ENCODE measurements at regions of chrX and their contacts with region 1.

Region 1: GRCh38 chrX:111652719-111653118 is 28.3 kb upstream of the ALG13 start:
- DNase-seq: no peak
- H3K4me3 ChIP-seq: no peak overlapping the region
- H3K4me3 Mint-ChIP-seq: no peak overlapping the region
- H3K27ac Mint-ChIP-seq: no peak overlapping the region
- H3K4me1 ChIP-seq: no peaks in the 10 kb centered on the region
- H3K4me1 Mint-ChIP-seq: no peaks in the 10 kb centered on the region
- H3K27me3 ChIP-seq: no peaks in the 10 kb centered on the region
- H3K27me3 Mint-ChIP-seq: no peaks in the 10 kb centered on the region
- CTCF ChIP-seq: no peak

Region 2: DNA sequence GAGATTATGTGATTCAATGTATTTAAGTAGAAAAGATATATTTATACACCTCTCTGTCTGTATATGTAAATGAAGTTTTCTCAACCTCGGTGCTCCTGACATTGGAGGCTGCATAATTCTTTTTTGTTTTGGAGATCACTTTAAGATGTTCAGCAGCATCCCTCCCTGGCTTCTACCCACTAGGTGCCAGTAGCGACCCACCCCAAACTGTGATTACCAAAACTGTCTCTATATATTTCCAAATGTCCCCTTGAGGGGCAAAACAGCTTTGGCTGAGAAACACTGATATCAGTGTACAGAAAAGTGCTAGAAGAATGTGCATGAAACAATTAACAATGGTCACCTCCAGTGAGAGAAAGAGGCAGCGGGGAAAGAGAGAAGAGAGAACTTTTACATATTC is 291.9 kb before region 1 on chrX:
- CTCF ChIA-PET with region 1: no interaction called
- POLR2A ChIA-PET with region 1: no interaction called
- intact Hi-C with region 1: loop called (anchors 10 kb)
- DNase-seq: peak in 1 of 2 experiments; percentile 4
- H3K4me3 ChIP-seq: no peak overlapping the region
- H3K4me3 Mint-ChIP-seq: no peak overlapping the region
- H3K27ac Mint-ChIP-seq: no peak overlapping the region
- H3K4me1 ChIP-seq: no peaks in the 10 kb centered on the region
- H3K4me1 Mint-ChIP-seq: no peaks in the 10 kb centered on the region
- H3K27me3 ChIP-seq: no peaks in the 10 kb centered on the region
- H3K27me3 Mint-ChIP-seq: no peaks in the 10 kb centered on the region
- CTCF ChIP-seq: no peak

Region 3: GRCh38 chrX:112137276-112137675 is 484.6 kb after region 1 on chrX:
- CTCF ChIA-PET with region 1: no interaction called
- POLR2A ChIA-PET with region 1: no interaction called
- intact Hi-C with region 1: no loop called
- DNase-seq: no peak
- H3K4me3 ChIP-seq: no peak overlapping the region
- H3K4me3 Mint-ChIP-seq: no peak overlapping the region
- H3K27ac Mint-ChIP-seq: no peak overlapping the region
- H3K4me1 ChIP-seq: no peaks in the 10 kb centered on the region
- H3K4me1 Mint-ChIP-seq: no peaks in the 10 kb centered on the region
- H3K27me3 ChIP-seq: no peaks in the 10 kb centered on the region
- H3K27me3 Mint-ChIP-seq: no peaks in the 10 kb centered on the region
- CTCF ChIP-seq: no peak

Region 4: GRCh38 chrX:112630187-112630586 is 977.5 kb after region 1 on chrX:
- CTCF ChIA-PET with region 1: no interaction called
- POLR2A ChIA-PET with region 1: no interaction called
- intact Hi-C with region 1: no loop called
- DNase-seq: no peak
- H3K4me3 ChIP-seq: no peak overlapping the region
- H3K4me3 Mint-ChIP-seq: no peak overlapping the region
- H3K27ac Mint-ChIP-seq: no peak overlapping the region
- H3K4me1 ChIP-seq: no peaks in the 10 kb centered on the region
- H3K4me1 Mint-ChIP-seq: no peaks in the 10 kb centered on the region
- H3K27me3 ChIP-seq: no peaks in the 10 kb centered on the region
- H3K27me3 Mint-ChIP-seq: peaks cover 10% of the 10 kb centered on the region
- CTCF ChIP-seq: no peak

Measured in Caco-2 (cell line).